ENCODE measurements at regions of chr10 and their contacts with region 1.

Region 1: GRCh38 chr10:11515596-11516430 is 95.6 kb downstream of the USP6NL start:
- DNase-seq: peak; percentile 71
- ATAC-seq: peak; percentile 82
- H3K4me3 Mint-ChIP-seq: no peak overlapping the region
- H3K27ac Mint-ChIP-seq: peak overlapping the region; percentile 6
- H3K4me1 Mint-ChIP-seq: peaks cover 20% of the 10 kb centered on the region
- H3K27me3 Mint-ChIP-seq: no peaks in the 10 kb centered on the region
- CTCF ChIP-seq: peak; percentile 88

Region 2: GRCh38 chr10:11505639-11506038 is 10.2 kb before region 1 on chr10:
- CTCF ChIA-PET with region 1: interaction called, 18 read pairs
- POLR2A ChIA-PET with region 1: no interaction called
- intact Hi-C with region 1: no loop called
- DNase-seq: peak; percentile 18
- ATAC-seq: no peak
- H3K4me3 Mint-ChIP-seq: no peak overlapping the region
- H3K27ac Mint-ChIP-seq: peak overlapping the region; percentile 9
- H3K4me1 Mint-ChIP-seq: peaks cover 10% of the 10 kb centered on the region
- H3K27me3 Mint-ChIP-seq: no peaks in the 10 kb centered on the region
- CTCF ChIP-seq: no peak

Region 3: DNA sequence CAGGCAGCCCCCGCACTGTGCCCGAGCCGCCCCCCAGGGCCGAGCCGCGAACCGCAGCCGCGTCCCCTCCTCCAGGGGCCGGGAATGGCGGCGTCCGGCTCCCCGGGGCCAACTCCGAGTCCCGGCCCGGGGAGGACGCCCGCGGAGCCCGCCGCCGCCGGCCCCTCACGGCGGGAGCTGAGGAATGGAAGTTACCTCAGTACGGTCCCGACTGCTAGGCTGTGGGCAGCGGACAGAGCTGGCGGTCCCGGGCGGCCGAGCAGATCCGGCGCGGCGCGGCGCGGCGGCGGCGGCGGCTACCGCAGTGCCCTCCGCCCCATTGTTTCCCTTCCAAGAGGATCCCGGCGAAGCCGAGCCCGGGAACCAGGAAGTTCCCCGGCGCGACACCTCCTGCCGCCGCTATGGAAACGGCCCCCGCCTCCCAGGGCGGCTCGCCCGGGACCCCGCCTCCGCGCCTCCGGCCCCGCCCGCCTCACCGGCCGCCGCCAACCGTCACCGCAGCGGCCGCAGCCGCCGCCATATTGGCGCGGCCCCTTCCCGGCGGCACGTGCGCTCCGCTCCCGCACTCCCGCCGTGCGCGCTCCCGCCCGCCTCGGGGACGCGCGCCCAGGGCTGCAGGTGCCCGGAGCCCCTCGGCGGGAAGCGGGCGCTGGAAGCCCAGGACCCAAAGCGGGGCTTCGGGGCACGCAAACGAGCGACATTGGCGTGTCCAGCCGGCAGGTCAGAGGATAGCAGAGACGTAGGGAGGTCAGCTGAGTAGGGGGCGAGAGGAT is 95.6 kb after region 1 on chr10 and contains the start of gene USP6NL:
- CTCF ChIA-PET with region 1: interaction called, 5 read pairs
- POLR2A ChIA-PET with region 1: no interaction called
- intact Hi-C with region 1: loop called (anchors 5 kb)
- DNase-seq: peak; percentile 47
- ATAC-seq: peak; percentile 42
- H3K4me3 Mint-ChIP-seq: peak within 1 kb of the TSS; percentile 82
- H3K27ac Mint-ChIP-seq: peak within 1 kb of the TSS; percentile 78
- H3K4me1 Mint-ChIP-seq: peaks cover 42% of the 10 kb centered on the region
- H3K27me3 Mint-ChIP-seq: peaks cover 4% of the 10 kb centered on the region
- CTCF ChIP-seq: no peak
- total RNA-seq, gene USP6NL: 2.3 to 2.5 TPM

Region 4: DNA sequence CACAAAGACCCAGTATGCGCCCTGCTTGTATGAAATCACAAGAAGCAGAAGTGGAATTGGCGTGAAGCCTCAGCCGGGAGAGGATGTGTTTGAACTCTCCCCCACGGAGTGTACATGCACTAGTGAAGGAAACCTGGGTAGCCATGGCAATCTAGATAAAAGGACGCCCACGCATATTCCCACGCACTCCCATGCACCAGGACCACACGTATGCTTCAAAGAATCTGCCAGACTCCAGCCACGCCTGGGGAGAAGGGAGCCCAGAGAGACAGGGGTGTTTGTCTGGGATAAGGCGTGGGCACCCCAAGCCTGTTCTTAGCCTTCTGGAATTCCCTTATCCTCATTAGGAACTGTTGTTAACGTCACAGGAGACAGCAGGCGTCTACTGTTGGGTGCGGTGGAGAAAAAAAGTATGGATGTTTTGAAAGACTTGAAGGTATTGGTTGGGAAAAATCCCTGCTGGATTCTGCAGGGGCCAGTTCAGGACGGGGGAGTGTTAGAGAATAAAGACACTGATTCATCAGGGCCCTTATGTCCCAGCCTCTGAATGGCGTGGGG is 197.5 kb after region 1 on chr10:
- CTCF ChIA-PET with region 1: interaction called, 4 read pairs
- POLR2A ChIA-PET with region 1: no interaction called
- intact Hi-C with region 1: loop called (anchors 5 kb)
- DNase-seq: peak; percentile 19
- ATAC-seq: no peak
- H3K4me3 Mint-ChIP-seq: no peak overlapping the region
- H3K27ac Mint-ChIP-seq: no peak overlapping the region
- H3K4me1 Mint-ChIP-seq: peaks cover 18% of the 10 kb centered on the region
- H3K27me3 Mint-ChIP-seq: peaks cover 49% of the 10 kb centered on the region
- CTCF ChIP-seq: no peak

Region 5: GRCh38 chr10:11724938-11725776 is 209.3 kb after region 1 on chr10:
- CTCF ChIA-PET with region 1: interaction called, 33 read pairs
- POLR2A ChIA-PET with region 1: no interaction called
- intact Hi-C with region 1: loop called (anchors 1 kb)
- DNase-seq: no peak
- ATAC-seq: peak; percentile 80
- H3K4me3 Mint-ChIP-seq: no peak overlapping the region
- H3K27ac Mint-ChIP-seq: no peak overlapping the region
- H3K4me1 Mint-ChIP-seq: peaks cover 4% of the 10 kb centered on the region
- H3K27me3 Mint-ChIP-seq: peaks cover 23% of the 10 kb centered on the region
- CTCF ChIP-seq: peak; percentile 70

Measured in activated CD8-positive, alpha-beta T cell treated with anti-CD3 and anti-CD28 coated beads for 36 hours (primary cell).